K562 (cell line): ENCODE measurements at regions of chr19 and their contacts with region 1.

Region 1: GRCh38 chr19:19865739-19866481 is at the start of gene ZNF253:
- DNase-seq: peak; percentile 95 to 98 (median 96)
- ATAC-seq: peak; percentile 97
- H3K4me3 ChIP-seq: peak within 1 kb of the TSS; percentile 75
- H3K27ac ChIP-seq: peak within 1 kb of the TSS; percentile 94
- H3K4me1 ChIP-seq: peaks cover 0 to 5% of the 10 kb centered on the region in 2 experiments; a peak in 3 of 5 replicates
- H3K27me3 ChIP-seq: no peaks in the 10 kb centered on the region
- CTCF ChIP-seq: peak in 1 of 3 experiments; percentile 17; a peak in 1 of 6 replicates
- EP300 ChIP-seq: no peak
- POLR2A ChIP-seq: peak; percentile 97
- RAD21 ChIP-seq: peak in 1 of 2 experiments; percentile 20; a peak in 1 of 4 replicates
- polyA plus RNA-seq, gene ZNF253: 4.0 to 6.9 TPM

Region 2: GRCh38 chr19:19663256-19664038 is 202.5 kb before region 1 on chr19 and contains the start of gene ATP13A1:
- CTCF ChIA-PET with region 1: no interaction called
- POLR2A ChIA-PET with region 1: interaction called, 3 read pairs
- in situ Hi-C with region 1: no loop called
- intact Hi-C with region 1: loop called (anchors 5 kb)
- DNase-seq: peak; percentile 74 to 96 (median 82)
- ATAC-seq: peak; percentile 93
- H3K4me3 ChIP-seq: peak within 1 kb of the TSS; percentile 92
- H3K27ac ChIP-seq: peak within 1 kb of the TSS; percentile 100
- H3K4me1 ChIP-seq: peaks cover 10 to 41% of the 10 kb centered on the region in 2 experiments; a peak in 4 of 5 replicates
- H3K27me3 ChIP-seq: no peaks in the 10 kb centered on the region
- CTCF ChIP-seq: peak in 1 of 3 experiments; percentile 37; a peak in 1 of 6 replicates
- EP300 ChIP-seq: no peak
- POLR2A ChIP-seq: peak; percentile 91
- RAD21 ChIP-seq: no peak
- polyA plus RNA-seq, gene ATP13A1: 0.90 to 1.8 TPM

Region 3: GRCh38 chr19:19776041-19777008 is 89.6 kb before region 1 on chr19:
- CTCF ChIA-PET with region 1: no interaction called
- POLR2A ChIA-PET with region 1: interaction called, 11 read pairs
- in situ Hi-C with region 1: no loop called
- intact Hi-C with region 1: no loop called
- DNase-seq: peak; percentile 92 to 98 (median 92)
- ATAC-seq: peak; percentile 100
- H3K4me3 ChIP-seq: peak overlapping the region; percentile 63
- H3K27ac ChIP-seq: peak overlapping the region; percentile 31; the same call in 2 of the 3 replicates
- H3K4me1 ChIP-seq: no peaks in the 10 kb centered on the region; a peak in 1 of 5 replicates
- H3K27me3 ChIP-seq: no peaks in the 10 kb centered on the region
- CTCF ChIP-seq: peak in 1 of 3 experiments; percentile 1; a peak in 1 of 6 replicates
- EP300 ChIP-seq: no peak
- POLR2A ChIP-seq: peak; percentile 76
- RAD21 ChIP-seq: no peak

Region 4: DNA sequence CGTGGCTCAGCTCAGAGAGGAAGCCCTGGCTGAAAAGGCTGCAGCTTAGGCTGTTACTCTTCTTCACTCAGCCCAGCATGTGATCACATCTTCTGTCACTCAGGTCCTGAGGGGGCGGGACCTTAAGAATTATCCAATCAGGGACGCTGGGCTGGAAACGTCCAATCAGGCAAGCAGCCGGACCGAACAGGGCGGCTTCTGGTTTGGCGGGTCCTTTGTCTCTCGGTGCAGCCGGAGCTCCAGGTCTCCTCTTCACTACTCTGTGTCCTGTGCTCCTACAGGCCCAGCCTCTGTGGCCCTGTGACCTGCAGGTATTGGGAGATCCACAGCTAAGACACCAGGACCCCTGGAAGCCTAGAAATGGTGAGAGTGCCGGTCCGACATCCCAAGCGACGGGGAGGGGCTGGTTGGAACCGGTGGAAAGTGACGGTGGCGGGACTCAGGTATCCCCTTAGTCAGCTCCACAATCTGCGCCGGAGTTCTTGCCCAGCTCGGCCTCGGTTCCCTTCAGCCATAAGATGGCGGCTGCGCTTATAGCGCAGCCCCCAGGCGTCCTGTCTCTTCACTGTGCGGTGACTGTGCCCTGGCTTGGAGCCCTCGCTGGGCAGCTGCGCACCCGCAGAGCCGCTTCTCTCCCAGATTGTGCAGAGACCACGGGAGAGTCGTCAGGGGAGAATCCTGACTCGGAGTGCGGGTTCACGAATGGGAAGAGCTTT is 35.0 kb after region 1 on chr19 and contains the start of gene ZNF93:
- CTCF ChIA-PET with region 1: no interaction called
- POLR2A ChIA-PET with region 1: interaction called, 16 read pairs
- in situ Hi-C with region 1: no loop called
- intact Hi-C with region 1: loop called (anchors 1 kb)
- DNase-seq: peak; percentile 94 to 96 (median 95)
- ATAC-seq: peak; percentile 97
- H3K4me3 ChIP-seq: peak within 1 kb of the TSS; percentile 63
- H3K27ac ChIP-seq: peak within 1 kb of the TSS; percentile 91
- H3K4me1 ChIP-seq: peaks cover 8 to 16% of the 10 kb centered on the region in 2 experiments
- H3K27me3 ChIP-seq: no peaks in the 10 kb centered on the region
- CTCF ChIP-seq: no peak
- EP300 ChIP-seq: no peak
- POLR2A ChIP-seq: peak; percentile 92
- RAD21 ChIP-seq: no peak; a peak in 1 of 4 replicates
- polyA plus RNA-seq, gene ZNF93: 17.1 to 26.3 TPM

Region 5: GRCh38 chr19:19943848-19944582 is 78.1 kb after region 1 on chr19:
- CTCF ChIA-PET with region 1: no interaction called
- POLR2A ChIA-PET with region 1: no interaction called
- in situ Hi-C with region 1: no loop called
- intact Hi-C with region 1: loop called (anchors 10 kb)
- DNase-seq: peak in 3 of 4 experiments; percentile 14 to 50 (median 28)
- ATAC-seq: peak; percentile 74
- H3K4me3 ChIP-seq: no peak overlapping the region
- H3K27ac ChIP-seq: peak overlapping the region; percentile 61
- H3K4me1 ChIP-seq: peaks cover 0 to 10% of the 10 kb centered on the region in 2 experiments; a peak in 3 of 5 replicates
- H3K27me3 ChIP-seq: no peaks in the 10 kb centered on the region
- CTCF ChIP-seq: no peak
- EP300 ChIP-seq: peak; percentile 84
- POLR2A ChIP-seq: no peak
- RAD21 ChIP-seq: no peak